ENCODE measurements at regions of chr1 and their contacts with region 1.

Region 1: DNA sequence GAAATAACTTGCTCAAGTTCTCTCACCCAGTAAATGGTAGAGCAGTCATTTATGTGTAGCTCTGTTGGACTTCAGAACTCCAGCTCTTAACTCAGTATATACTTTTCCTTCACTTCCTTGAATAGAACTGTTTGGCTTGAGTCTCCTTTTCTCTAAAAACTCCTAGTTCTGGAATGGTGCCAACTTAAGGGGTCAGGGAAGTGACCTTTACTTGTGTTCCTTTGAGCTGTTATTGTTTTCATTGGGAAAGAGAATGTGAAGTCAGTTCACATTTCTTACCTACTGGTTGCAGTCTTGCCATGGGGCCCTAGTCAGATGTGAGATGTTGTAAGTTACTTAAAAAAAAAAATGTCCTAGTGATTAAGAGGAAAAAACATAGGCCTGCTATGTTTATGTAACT is 77.0 kb upstream of the MACF1 start:
- DNase-seq: peak; percentile 49 to 77
- H3K4me3 ChIP-seq: no peak overlapping the region
- H3K27ac ChIP-seq: peak overlapping the region; percentile 83
- H3K4me1 ChIP-seq: peaks cover 70% of the 10 kb centered on the region
- H3K27me3 ChIP-seq: no peaks in the 10 kb centered on the region
- CTCF ChIP-seq: no peak

Region 2: GRCh38 chr1:39170731-39171667 is 43.5 kb after region 1 on chr1:
- CTCF ChIA-PET with region 1: interaction called, 9 read pairs
- POLR2A ChIA-PET with region 1: interaction called, 17 read pairs
- intact Hi-C with region 1: loop called (anchors 5 kb)
- DNase-seq: no peak
- H3K4me3 ChIP-seq: no peak overlapping the region
- H3K27ac ChIP-seq: no peak overlapping the region
- H3K4me1 ChIP-seq: peaks cover 14% of the 10 kb centered on the region
- H3K27me3 ChIP-seq: no peaks in the 10 kb centered on the region
- CTCF ChIP-seq: no peak

Region 3: GRCh38 chr1:39230261-39231190 is 103.0 kb after region 1 on chr1:
- CTCF ChIA-PET with region 1: no interaction called
- POLR2A ChIA-PET with region 1: no interaction called
- intact Hi-C with region 1: no loop called
- DNase-seq: no peak
- H3K4me3 ChIP-seq: no peak overlapping the region
- H3K27ac ChIP-seq: no peak overlapping the region
- H3K4me1 ChIP-seq: no peaks in the 10 kb centered on the region
- H3K27me3 ChIP-seq: no peaks in the 10 kb centered on the region
- CTCF ChIP-seq: no peak

Measured in PC-9 (cell line).